CD8-positive, alpha-beta T cell (primary cell): ENCODE measurements at regions of chr19 and their contacts with region 1.

Region 1: DNA sequence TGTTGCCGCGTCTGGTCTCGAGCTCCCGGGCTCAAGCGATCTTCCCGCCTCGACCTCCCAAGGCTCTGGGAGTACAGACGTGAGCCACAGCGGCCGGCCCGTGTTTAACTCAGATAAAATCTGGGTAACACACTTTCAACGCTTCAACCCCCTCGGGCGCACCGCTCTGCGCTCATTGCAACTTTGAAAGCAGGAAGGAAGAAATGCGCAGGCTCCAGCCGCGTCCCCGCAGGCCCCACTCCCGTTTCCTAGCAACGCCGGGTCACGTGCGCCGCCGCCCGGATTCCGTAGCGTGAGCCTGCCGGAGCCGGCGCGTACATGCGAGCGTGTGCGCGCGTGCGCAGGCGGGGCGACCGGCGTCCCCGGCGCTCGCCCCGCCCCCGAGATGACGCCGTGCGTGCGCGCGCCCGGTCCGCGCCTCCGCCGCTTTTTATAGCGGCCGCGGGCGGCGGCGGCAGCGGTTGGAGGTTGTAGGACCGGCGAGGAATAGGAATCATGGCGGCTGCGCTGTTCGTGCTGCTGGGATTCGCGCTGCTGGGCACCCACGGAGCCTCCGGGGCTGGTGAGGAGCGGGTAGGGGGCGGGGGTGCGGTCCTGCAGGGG is at the start of gene BSG:
- DNase-seq: peak; percentile 96 to 100 (median 99)
- ATAC-seq: peak; percentile 79
- H3K4me3 ChIP-seq: peak within 1 kb of the TSS; percentile 85 to 98
- H3K4me3 Mint-ChIP-seq: peak within 1 kb of the TSS; percentile 89
- H3K27ac ChIP-seq: peak within 1 kb of the TSS; percentile 86 to 90
- H3K27ac Mint-ChIP-seq: peak within 1 kb of the TSS; percentile 96
- H3K4me1 ChIP-seq: peaks cover 26% of the 10 kb centered on the region
- H3K4me1 Mint-ChIP-seq: peaks cover 38% of the 10 kb centered on the region
- H3K27me3 ChIP-seq: no peaks in the 10 kb centered on the region
- H3K27me3 Mint-ChIP-seq: no peaks in the 10 kb centered on the region
- CTCF ChIP-seq: no peak
- total RNA-seq, gene BSG: 76.2 to 81.2 TPM

Region 2: GRCh38 chr19:488505-489417 is 83.5 kb before region 1 on chr19:
- CTCF ChIA-PET with region 1: no interaction called
- POLR2A ChIA-PET with region 1: no interaction called
- intact Hi-C with region 1: loop called in 1 of 2 experiments (anchors 1 kb)
- DNase-seq: peak; percentile 85 to 96 (median 93)
- ATAC-seq: peak; percentile 93
- H3K4me3 ChIP-seq: peak overlapping the region; percentile 55 to 84
- H3K4me3 Mint-ChIP-seq: peak overlapping the region; percentile 83
- H3K27ac ChIP-seq: peak overlapping the region; percentile 74 to 80
- H3K27ac Mint-ChIP-seq: peak overlapping the region; percentile 85
- H3K4me1 ChIP-seq: peaks cover 6% of the 10 kb centered on the region
- H3K4me1 Mint-ChIP-seq: peaks cover 11% of the 10 kb centered on the region
- H3K27me3 ChIP-seq: no peaks in the 10 kb centered on the region
- H3K27me3 Mint-ChIP-seq: peaks cover 8% of the 10 kb centered on the region
- CTCF ChIP-seq: no peak

Region 3: DNA sequence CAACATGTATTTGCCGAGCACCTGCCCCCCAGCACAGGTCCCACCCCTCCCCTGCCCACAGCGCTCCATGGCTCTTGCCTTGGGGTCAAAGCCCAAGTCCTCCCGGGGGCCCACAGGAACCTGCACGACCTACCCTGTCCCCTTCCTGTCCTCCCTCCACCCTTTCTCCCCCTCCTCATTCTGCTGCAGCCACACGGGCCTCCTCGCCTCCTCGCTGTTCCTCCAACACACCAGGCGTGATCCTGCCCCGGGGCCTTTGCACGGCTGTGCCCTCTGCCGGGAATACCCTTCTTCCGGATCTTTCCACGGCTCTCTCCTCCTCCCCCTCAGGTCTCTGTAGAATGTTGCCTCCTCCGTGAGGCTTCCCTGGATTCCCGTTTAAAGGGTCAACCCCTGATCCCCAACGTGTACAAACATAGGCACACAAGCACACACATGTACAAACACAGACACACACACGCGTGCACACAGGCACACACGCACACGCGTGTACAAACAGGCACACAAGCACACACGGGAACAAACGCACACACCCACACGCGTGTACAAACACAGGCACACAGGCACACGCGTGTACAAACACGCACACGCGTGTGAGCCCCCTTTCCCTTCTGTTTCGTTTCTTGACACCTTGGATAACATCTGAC is 73.1 kb before region 1 on chr19:
- CTCF ChIA-PET with region 1: no interaction called
- POLR2A ChIA-PET with region 1: no interaction called
- intact Hi-C with region 1: no loop called
- DNase-seq: no peak
- ATAC-seq: no peak
- H3K4me3 ChIP-seq: no peak overlapping the region
- H3K4me3 Mint-ChIP-seq: no peak overlapping the region
- H3K27ac ChIP-seq: no peak overlapping the region
- H3K27ac Mint-ChIP-seq: no peak overlapping the region
- H3K4me1 ChIP-seq: peaks cover 12% of the 10 kb centered on the region
- H3K4me1 Mint-ChIP-seq: peaks cover 6% of the 10 kb centered on the region
- H3K27me3 ChIP-seq: peaks cover 11 to 23% of the 10 kb centered on the region in 2 experiments
- H3K27me3 Mint-ChIP-seq: peaks cover 18% of the 10 kb centered on the region
- CTCF ChIP-seq: no peak

Region 4: DNA sequence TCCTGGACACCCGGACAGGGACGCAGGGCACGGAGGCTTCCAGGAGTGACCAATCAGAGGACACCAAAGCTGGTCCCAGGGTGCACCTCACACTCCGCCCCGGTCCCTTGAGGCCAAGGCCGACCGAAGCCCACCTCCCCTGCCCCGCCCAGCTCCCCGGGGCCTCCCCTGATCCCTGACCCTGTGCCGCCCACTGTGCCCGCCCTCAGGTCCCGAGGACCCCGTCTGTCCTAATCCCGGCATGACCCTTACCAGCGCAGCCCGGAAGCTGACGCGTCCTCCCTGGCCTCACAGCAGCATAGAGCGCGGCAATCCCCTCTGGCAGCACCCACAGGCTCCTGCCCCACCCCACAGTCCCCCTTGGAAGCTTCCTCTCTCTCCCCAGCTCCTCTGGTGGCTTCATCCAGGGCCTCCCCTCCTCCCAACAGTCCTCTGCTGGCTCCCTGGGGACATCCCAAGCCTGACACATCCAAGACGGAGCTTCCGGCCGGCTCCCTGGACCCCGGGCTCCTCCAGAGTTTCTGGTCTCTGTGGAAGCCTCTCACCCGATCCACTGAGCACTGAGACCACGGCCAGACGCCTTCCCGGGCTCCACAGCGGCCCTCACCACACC is 48.1 kb before region 1 on chr19:
- CTCF ChIA-PET with region 1: no interaction called
- POLR2A ChIA-PET with region 1: no interaction called
- intact Hi-C with region 1: no loop called
- DNase-seq: peak in 1 of 9 experiments; percentile 16
- ATAC-seq: no peak
- H3K4me3 ChIP-seq: no peak overlapping the region
- H3K4me3 Mint-ChIP-seq: no peak overlapping the region
- H3K27ac ChIP-seq: no peak overlapping the region
- H3K27ac Mint-ChIP-seq: no peak overlapping the region
- H3K4me1 ChIP-seq: no peaks in the 10 kb centered on the region
- H3K4me1 Mint-ChIP-seq: peaks cover 2% of the 10 kb centered on the region
- H3K27me3 ChIP-seq: no peaks in the 10 kb centered on the region
- H3K27me3 Mint-ChIP-seq: peaks cover 7% of the 10 kb centered on the region
- CTCF ChIP-seq: no peak

Region 5: GRCh38 chr19:543910-544608 is 28.2 kb before region 1 on chr19 and contains the start of gene GZMM:
- CTCF ChIA-PET with region 1: no interaction called
- POLR2A ChIA-PET with region 1: no interaction called
- intact Hi-C with region 1: loop called (anchors 1 kb)
- DNase-seq: peak; percentile 66 to 95 (median 84)
- ATAC-seq: peak; percentile 94
- H3K4me3 ChIP-seq: peak within 1 kb of the TSS; percentile 94 to 99
- H3K4me3 Mint-ChIP-seq: peak within 1 kb of the TSS; percentile 92
- H3K27ac ChIP-seq: peak within 1 kb of the TSS; percentile 90 to 91
- H3K27ac Mint-ChIP-seq: peak within 1 kb of the TSS; percentile 94
- H3K4me1 ChIP-seq: peaks cover 20% of the 10 kb centered on the region
- H3K4me1 Mint-ChIP-seq: peaks cover 24% of the 10 kb centered on the region
- H3K27me3 ChIP-seq: no peaks in the 10 kb centered on the region
- H3K27me3 Mint-ChIP-seq: no peaks in the 10 kb centered on the region
- CTCF ChIP-seq: no peak
- total RNA-seq, gene GZMM: 117 to 119 TPM

Region 6: DNA sequence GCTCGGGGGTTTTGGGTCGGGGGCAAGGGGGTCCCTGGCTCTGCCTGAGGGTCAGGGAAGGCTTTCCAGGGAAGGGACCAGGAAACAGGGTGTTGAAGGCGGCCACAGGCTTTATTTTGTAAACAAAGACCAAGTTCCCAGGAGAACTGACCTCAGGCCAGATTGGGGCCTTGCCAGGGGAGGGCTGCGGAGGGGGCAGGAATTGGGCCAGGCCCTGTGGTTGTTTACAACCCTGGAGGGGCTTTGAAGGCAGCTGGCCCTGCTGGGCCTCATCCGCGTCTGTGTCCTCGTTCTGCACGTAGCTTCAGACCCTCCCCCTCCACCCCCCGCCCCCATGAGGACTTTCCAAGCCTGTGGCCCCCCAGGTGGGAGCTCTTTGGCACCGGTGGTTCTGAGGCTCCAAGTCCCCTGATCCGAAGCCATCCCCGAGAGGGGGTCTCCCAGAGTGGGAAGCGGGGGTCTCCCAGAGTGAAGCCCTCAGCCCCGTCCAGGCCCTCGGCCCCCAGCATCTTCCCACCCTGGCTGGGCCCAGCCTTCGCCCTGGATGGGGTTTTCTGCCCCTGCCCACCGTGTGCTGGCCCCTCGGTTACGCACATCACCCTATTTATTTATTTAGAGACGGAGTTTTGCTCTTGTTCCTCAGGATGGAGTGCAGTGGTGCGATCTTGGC is 13.3 kb before region 1 on chr19:
- CTCF ChIA-PET with region 1: no interaction called
- POLR2A ChIA-PET with region 1: no interaction called
- intact Hi-C with region 1: no loop called
- DNase-seq: no peak
- ATAC-seq: no peak
- H3K4me3 ChIP-seq: no peak overlapping the region
- H3K4me3 Mint-ChIP-seq: no peak overlapping the region
- H3K27ac ChIP-seq: no peak overlapping the region
- H3K27ac Mint-ChIP-seq: no peak overlapping the region
- H3K4me1 ChIP-seq: no peaks in the 10 kb centered on the region
- H3K4me1 Mint-ChIP-seq: no peaks in the 10 kb centered on the region
- H3K27me3 ChIP-seq: no peaks in the 10 kb centered on the region
- H3K27me3 Mint-ChIP-seq: no peaks in the 10 kb centered on the region
- CTCF ChIP-seq: no peak

Region 7: GRCh38 chr19:633068-633785 is 61.0 kb after region 1 on chr19 and contains the start of gene POLRMT:
- CTCF ChIA-PET with region 1: no interaction called
- POLR2A ChIA-PET with region 1: no interaction called
- intact Hi-C with region 1: loop called (anchors 1 kb)
- DNase-seq: peak; percentile 88 to 99 (median 95)
- ATAC-seq: peak; percentile 95
- H3K4me3 ChIP-seq: peak within 1 kb of the TSS; percentile 89 to 93
- H3K4me3 Mint-ChIP-seq: peak within 1 kb of the TSS; percentile 95
- H3K27ac ChIP-seq: peak within 1 kb of the TSS; percentile 61 to 72
- H3K27ac Mint-ChIP-seq: peak within 1 kb of the TSS; percentile 94
- H3K4me1 ChIP-seq: peaks cover 22% of the 10 kb centered on the region
- H3K4me1 Mint-ChIP-seq: peaks cover 30% of the 10 kb centered on the region
- H3K27me3 ChIP-seq: no peaks in the 10 kb centered on the region
- H3K27me3 Mint-ChIP-seq: no peaks in the 10 kb centered on the region
- CTCF ChIP-seq: no peak
- total RNA-seq, gene POLRMT: 48.6 to 53.7 TPM

Region 8: GRCh38 chr19:639253-640160 is 67.3 kb after region 1 on chr19 and contains the start of gene FGF22:
- CTCF ChIA-PET with region 1: no interaction called
- POLR2A ChIA-PET with region 1: no interaction called
- intact Hi-C with region 1: loop called in 1 of 2 experiments (anchors 1 kb)
- DNase-seq: peak; percentile 91 to 98 (median 96)
- ATAC-seq: peak; percentile 96
- H3K4me3 ChIP-seq: peak within 1 kb of the TSS; percentile 53 to 61
- H3K4me3 Mint-ChIP-seq: peak within 1 kb of the TSS; percentile 84
- H3K27ac ChIP-seq: peak within 1 kb of the TSS in 1 of 2 experiments; percentile 14
- H3K27ac Mint-ChIP-seq: peak within 1 kb of the TSS; percentile 93
- H3K4me1 ChIP-seq: peaks cover 13% of the 10 kb centered on the region
- H3K4me1 Mint-ChIP-seq: peaks cover 9% of the 10 kb centered on the region
- H3K27me3 ChIP-seq: no peaks in the 10 kb centered on the region
- H3K27me3 Mint-ChIP-seq: no peaks in the 10 kb centered on the region
- CTCF ChIP-seq: no peak
- total RNA-seq, gene FGF22: 0.65 to 0.97 TPM

Region 9: DNA sequence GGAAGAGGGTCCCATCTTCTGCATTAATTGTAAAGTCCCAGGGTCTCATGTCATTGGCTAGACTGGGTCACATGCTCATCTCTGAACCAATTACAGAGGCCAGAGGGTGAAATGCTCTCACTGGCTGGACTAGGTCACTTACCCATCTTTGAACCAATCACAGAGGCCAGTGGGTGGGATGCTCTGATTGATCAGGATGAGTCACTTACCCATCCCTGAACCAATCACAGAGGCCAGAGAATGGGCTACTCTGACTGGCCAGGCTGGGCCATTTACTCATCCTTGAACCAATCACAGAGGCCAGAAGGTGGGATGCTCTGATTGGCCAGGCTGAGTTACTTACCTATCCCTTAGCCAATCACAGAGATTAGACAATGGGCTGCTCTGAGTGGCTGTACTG is 184.0 kb after region 1 on chr19:
- CTCF ChIA-PET with region 1: no interaction called
- POLR2A ChIA-PET with region 1: no interaction called
- intact Hi-C with region 1: no loop called
- DNase-seq: peak in 1 of 9 experiments; percentile 18
- ATAC-seq: no peak
- H3K4me3 ChIP-seq: no peak overlapping the region
- H3K4me3 Mint-ChIP-seq: no peak overlapping the region
- H3K27ac ChIP-seq: no peak overlapping the region
- H3K27ac Mint-ChIP-seq: no peak overlapping the region
- H3K4me1 ChIP-seq: no peaks in the 10 kb centered on the region
- H3K4me1 Mint-ChIP-seq: no peaks in the 10 kb centered on the region
- H3K27me3 ChIP-seq: no peaks in the 10 kb centered on the region
- H3K27me3 Mint-ChIP-seq: peaks cover 6% of the 10 kb centered on the region
- CTCF ChIP-seq: no peak